Posterior cingulate gyrus (tissue), 11 donors: ENCODE measurements at regions of chr10 and their contacts with region 1.

Region 1: GRCh38 chr10:64286533-64286932 is 765.3 kb downstream of the REEP3 start:
- DNase-seq: peak in 6 of 10 donors; percentile 24 to 91 (median 52)

Region 2: GRCh38 chr10:64091897-64092296 is 194.6 kb before region 1 on chr10:
- intact Hi-C with region 1: loop called (anchors 5 kb)
- DNase-seq: peak in 5 of 10 donors; percentile 13 to 84 (median 43)

Region 3: DNA sequence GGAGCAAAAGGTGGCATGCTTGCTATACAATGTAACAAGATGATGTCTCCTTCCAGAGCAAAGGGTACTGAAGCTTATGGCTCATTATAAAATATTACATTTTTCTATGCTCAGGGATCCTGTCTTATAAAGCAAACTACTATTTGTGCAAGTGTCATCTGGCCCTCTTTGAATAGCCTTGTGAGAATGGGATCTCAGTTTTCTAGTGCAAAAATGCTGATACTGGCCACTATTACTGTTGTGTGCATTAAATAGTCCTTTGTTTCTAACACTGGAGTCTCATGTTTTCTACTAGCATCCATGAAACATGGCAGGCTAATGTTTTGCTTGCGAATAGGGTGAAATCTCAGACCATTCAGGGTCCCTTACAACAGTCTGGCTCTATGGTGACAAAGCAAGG is 57.7 kb after region 1 on chr10:
- intact Hi-C with region 1: loop called (anchors 5 kb)
- DNase-seq: no peak